ENCODE measurements at regions of chr6 and their contacts with region 1.

Region 1: GRCh38 chr6:149028767-149029405 is 282.1 kb downstream of the UST start:
- DNase-seq: no peak

Region 2: DNA sequence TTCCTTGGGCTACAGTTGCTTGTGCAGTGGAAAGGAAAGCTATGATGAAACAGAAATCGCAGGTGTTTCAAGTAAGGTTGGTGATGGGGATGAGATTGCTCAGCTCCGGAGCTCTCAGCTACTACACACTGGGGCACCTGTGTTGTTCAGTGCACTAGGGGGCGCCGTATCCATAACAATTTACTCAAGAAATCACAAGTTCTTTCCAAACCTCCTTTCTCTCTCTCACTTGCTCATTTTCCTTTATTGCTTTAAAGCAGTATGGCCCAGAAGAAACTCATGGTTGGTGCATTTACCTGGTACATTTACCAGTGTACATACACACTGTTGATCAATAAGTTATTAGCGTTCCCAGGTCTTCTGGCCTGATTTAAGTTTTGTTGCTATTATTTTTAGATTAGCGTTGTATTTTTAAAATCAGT is 53.4 kb after region 1 on chr6:
- intact Hi-C with region 1: loop called (anchors 5 kb)
- DNase-seq: peak; percentile 79

Region 3: DNA sequence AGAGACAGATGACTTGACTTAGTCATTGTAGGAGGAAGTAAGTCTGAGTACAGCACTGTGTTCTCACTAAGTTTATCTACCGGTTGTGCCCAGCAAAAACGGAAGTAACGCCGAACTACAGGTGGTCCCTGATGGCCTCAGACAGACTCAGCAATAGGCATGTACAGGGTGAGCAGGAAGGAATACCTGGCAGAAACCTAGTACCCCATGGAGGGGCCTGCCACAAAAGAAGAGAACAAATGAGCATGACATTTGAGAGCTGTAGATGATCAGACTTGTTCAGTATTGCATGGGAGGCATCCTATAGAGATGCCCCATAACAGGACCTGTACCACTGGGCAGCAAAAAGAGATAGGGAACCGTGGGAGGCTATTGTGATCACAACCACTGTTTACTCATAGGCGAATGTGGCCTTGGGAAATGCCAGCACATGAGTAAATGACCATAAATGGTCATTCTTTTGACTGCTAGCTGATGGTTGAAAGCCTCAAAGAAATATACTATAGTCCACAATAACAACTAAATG is 182.2 kb after region 1 on chr6:
- intact Hi-C with region 1: no loop called
- DNase-seq: no peak

Region 4: DNA sequence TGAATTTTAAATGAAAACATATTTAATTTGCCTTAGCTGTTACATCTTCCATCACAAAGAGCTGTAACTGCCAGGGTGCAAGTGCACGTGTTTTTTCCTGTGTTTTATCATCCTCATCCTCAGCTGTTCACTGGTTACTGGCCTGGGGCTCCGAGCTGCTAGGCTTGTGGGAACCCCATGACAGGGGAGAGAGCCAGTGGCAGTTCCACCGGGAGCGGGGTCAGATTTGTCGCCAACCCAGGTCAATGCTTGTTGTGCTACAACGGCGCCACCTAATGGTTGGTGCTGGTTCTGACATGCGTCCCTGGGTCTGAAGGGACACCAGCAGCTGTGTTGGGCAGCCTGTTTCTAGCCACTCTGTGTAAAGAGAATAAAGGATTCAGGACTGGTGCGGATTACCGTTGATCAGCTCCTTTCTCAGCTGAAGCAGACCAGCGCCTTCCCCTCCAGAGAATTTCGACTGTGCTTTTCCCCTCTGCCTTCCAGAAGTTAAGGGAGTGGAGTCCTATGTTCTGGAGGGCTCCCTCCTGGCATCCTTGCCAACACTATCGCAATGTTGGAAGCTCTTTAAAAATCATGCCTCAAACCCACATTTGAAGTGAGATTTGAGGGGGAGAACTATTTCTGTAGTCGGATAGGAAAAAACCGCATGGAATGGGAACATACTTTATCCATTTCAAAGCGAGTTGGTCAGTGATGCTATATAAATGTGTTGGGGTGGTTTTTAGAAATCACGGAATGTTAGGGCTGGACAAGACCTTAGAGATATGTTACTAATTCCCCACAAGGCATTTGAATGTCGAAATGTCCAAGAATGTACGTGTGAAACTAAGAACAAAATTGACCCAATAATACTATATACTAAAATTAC is 403.3 kb after region 1 on chr6:
- intact Hi-C with region 1: loop called (anchors 5 kb)
- DNase-seq: peak; percentile 94

Region 5: GRCh38 chr6:149513915-149514314 is 485.0 kb after region 1 on chr6:
- intact Hi-C with region 1: loop called (anchors 2 kb)
- DNase-seq: no peak

Measured in cardiac septum (tissue), 1 donor.